Activated naive CD4-positive, alpha-beta T cell treated with anti-CD3 and anti-CD28 coated beads for 36 hours (primary cell): ENCODE measurements at regions of chr3 and their contacts with region 1.

Region 1: GRCh38 chr3:184250167-184250828 is 826 bp downstream of the EEF1AKMT4 start:
- DNase-seq: peak; percentile 95
- H3K4me3 Mint-ChIP-seq: peak overlapping the region; percentile 91
- H3K27ac Mint-ChIP-seq: peak overlapping the region; percentile 63
- H3K4me1 Mint-ChIP-seq: peaks cover 8% of the 10 kb centered on the region
- H3K27me3 Mint-ChIP-seq: no peaks in the 10 kb centered on the region

Region 2: DNA sequence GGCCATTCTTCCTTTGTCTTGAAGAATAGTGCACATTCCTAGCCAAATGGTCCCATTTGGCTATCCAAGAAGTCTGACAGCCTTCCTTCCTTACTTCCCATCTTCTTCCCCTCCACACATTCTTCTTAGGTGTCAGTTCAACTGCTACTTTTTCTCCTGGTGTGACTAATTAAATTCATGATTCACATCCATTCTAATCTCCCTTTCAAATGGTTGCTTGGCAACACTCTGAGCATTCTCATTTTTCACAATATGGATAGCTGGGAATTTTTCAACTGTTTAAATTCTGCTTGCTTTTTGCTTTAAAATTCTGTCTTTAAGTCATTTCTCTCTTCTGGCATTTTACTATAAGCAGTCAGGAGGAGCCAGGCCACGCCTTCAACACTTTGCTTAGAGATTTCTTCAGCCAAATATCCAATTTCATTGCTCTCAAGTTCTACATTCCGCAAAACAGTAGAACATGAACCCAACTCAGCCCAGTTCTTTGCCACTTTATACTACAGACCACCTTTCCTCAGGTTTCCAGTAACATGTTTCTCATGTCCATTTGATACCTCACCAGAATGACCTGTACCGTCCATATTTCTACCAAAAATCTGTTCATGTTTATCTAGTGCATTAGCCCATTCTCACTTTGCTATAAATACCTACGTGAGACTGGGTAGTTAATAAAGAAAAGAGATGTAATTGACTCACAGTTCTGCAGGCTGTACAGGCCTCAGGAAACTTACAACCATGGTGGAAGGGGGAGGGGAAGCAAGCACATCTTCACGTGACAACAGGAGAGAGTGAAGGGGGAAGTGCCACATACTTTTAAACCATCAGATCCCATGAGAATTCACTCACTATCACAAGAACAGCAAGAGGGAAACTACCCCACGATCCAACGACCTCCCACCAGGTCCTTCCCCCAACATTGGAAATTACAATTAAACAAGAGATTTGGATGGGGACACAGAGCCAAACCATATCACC is 789.9 kb before region 1 on chr3:
- CTCF ChIA-PET with region 1: no interaction called
- intact Hi-C with region 1: loop called (anchors 10 kb)
- DNase-seq: no peak
- H3K4me3 Mint-ChIP-seq: no peak overlapping the region
- H3K27ac Mint-ChIP-seq: no peak overlapping the region
- H3K4me1 Mint-ChIP-seq: no peaks in the 10 kb centered on the region
- H3K27me3 Mint-ChIP-seq: no peaks in the 10 kb centered on the region

Region 3: GRCh38 chr3:183895296-183895695 is 355.0 kb before region 1 on chr3:
- CTCF ChIA-PET with region 1: interaction called, 5 read pairs
- intact Hi-C with region 1: loop called (anchors 1 kb)
- DNase-seq: peak; percentile 41
- H3K4me3 Mint-ChIP-seq: no peak overlapping the region
- H3K27ac Mint-ChIP-seq: no peak overlapping the region
- H3K4me1 Mint-ChIP-seq: peaks cover 3% of the 10 kb centered on the region
- H3K27me3 Mint-ChIP-seq: no peaks in the 10 kb centered on the region

Region 4: GRCh38 chr3:184135149-184135910 is 115.0 kb before region 1 on chr3 and contains the start of gene EIF2B5:
- CTCF ChIA-PET with region 1: interaction called, 3 read pairs
- intact Hi-C with region 1: loop called (anchors 1 kb)
- DNase-seq: peak; percentile 94
- H3K4me3 Mint-ChIP-seq: peak within 1 kb of the TSS; percentile 97
- H3K27ac Mint-ChIP-seq: peak within 1 kb of the TSS; percentile 97
- H3K4me1 Mint-ChIP-seq: peaks cover 29% of the 10 kb centered on the region
- H3K27me3 Mint-ChIP-seq: no peaks in the 10 kb centered on the region
- total RNA-seq, gene EIF2B5: 48.8 to 56.4 TPM

Region 5: GRCh38 chr3:184174646-184175492 is 75.4 kb before region 1 on chr3 and contains the start of gene AP2M1:
- CTCF ChIA-PET with region 1: interaction called, 4 read pairs
- intact Hi-C with region 1: loop called (anchors 1 kb)
- DNase-seq: peak; percentile 98
- H3K4me3 Mint-ChIP-seq: peak within 1 kb of the TSS; percentile 88
- H3K27ac Mint-ChIP-seq: peak within 1 kb of the TSS; percentile 56
- H3K4me1 Mint-ChIP-seq: peaks cover 29% of the 10 kb centered on the region
- H3K27me3 Mint-ChIP-seq: no peaks in the 10 kb centered on the region
- total RNA-seq, gene AP2M1: 206 to 212 TPM

Region 6: GRCh38 chr3:184261270-184261853 is 11.1 kb after region 1 on chr3 and contains the start of gene CAMK2N2:
- CTCF ChIA-PET with region 1: interaction called, 5 read pairs
- intact Hi-C with region 1: loop called (anchors 1 kb)
- DNase-seq: peak; percentile 57
- H3K4me3 Mint-ChIP-seq: peak within 1 kb of the TSS; percentile 75
- H3K27ac Mint-ChIP-seq: no peak within 1 kb of the TSS
- H3K4me1 Mint-ChIP-seq: peaks cover 18% of the 10 kb centered on the region
- H3K27me3 Mint-ChIP-seq: peaks cover 33% of the 10 kb centered on the region
- total RNA-seq, gene CAMK2N2: not detected

Region 7: DNA sequence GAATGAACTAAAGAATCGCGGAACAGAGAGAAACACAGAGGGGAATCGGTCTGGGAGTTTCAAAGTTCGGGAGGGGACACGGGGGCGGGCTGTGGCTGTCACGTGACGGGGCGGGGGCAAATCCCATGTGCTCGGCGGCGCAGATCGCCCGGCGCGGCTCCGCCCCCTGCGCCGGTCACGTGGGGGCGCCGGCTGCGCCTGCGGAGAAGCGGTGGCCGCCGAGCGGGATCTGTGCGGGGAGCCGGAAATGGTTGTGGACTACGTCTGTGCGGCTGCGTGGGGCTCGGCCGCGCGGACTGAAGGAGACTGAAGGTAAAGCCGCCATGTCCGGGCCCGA is 64.0 kb after region 1 on chr3 and contains the start of gene EIF4G1:
- CTCF ChIA-PET with region 1: interaction called, 5 read pairs
- intact Hi-C with region 1: loop called (anchors 1 kb)
- DNase-seq: peak; percentile 93
- H3K4me3 Mint-ChIP-seq: peak within 1 kb of the TSS; percentile 86
- H3K27ac Mint-ChIP-seq: peak within 1 kb of the TSS; percentile 90
- H3K4me1 Mint-ChIP-seq: peaks cover 29% of the 10 kb centered on the region
- H3K27me3 Mint-ChIP-seq: no peaks in the 10 kb centered on the region
- total RNA-seq, gene EIF4G1: 345 to 375 TPM